CD4-positive, alpha-beta memory T cell (primary cell): ENCODE measurements at regions of chr15 and their contacts with region 1.

Region 1: DNA sequence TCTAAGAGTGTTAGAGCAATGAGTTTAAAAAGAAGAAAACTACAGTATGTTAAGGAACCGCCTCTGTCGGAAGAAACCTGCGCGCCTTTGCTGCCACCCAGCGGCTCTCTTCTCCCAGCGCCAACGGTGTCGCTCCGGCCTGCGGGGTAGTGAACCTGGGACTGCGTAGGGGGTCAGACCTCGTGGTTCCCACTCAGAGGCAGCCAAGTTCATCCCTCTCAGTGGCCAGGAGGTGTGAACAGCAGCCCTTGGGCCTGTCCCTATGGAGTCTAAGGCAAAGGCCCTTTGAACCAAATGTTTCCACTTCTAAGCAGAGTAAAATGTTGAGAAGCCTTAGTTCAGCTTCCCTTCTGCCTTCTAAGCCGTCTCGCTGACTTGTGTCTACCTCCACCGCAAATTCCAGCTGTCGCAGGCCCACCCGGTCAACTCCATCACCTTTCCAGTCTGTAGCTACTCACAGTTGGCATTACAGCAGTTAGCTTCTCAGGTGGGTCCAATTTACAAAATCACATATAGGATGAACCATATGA is 980 bp upstream of the RAB27A start:
- DNase-seq: peak; percentile 80 to 84 (median 82)
- H3K4me3 ChIP-seq: peak overlapping the region; percentile 66 to 85
- H3K4me3 Mint-ChIP-seq: peak overlapping the region; percentile 88 to 96 (median 93)
- H3K27ac ChIP-seq: peak overlapping the region; percentile 96
- H3K27ac Mint-ChIP-seq: peak overlapping the region; percentile 87 to 96 (median 95)
- H3K4me1 ChIP-seq: peaks cover 36% of the 10 kb centered on the region
- H3K4me1 Mint-ChIP-seq: peaks cover 26 to 49% (median 31%) of the 10 kb centered on the region in 4 donors
- H3K27me3 ChIP-seq: no peaks in the 10 kb centered on the region
- H3K27me3 Mint-ChIP-seq: no peaks in the 10 kb centered on the region

Region 2: GRCh38 chr15:55196458-55197361 is 93.9 kb before region 1 on chr15 and contains the start of gene RSL24D1:
- CTCF ChIA-PET with region 1: interaction called, 6 read pairs
- POLR2A ChIA-PET with region 1: interaction called, 10 read pairs
- intact Hi-C with region 1: loop called (anchors 1 kb)
- DNase-seq: peak; percentile 94 to 98 (median 97)
- H3K4me3 ChIP-seq: peak within 1 kb of the TSS; percentile 90 to 97
- H3K4me3 Mint-ChIP-seq: no peak within 1 kb of the TSS
- H3K27ac ChIP-seq: peak within 1 kb of the TSS; percentile 87
- H3K27ac Mint-ChIP-seq: no peak within 1 kb of the TSS
- H3K4me1 ChIP-seq: peaks cover 40% of the 10 kb centered on the region
- H3K4me1 Mint-ChIP-seq: peaks cover 10 to 17% (median 13%) of the 10 kb centered on the region in 4 donors
- H3K27me3 ChIP-seq: no peaks in the 10 kb centered on the region
- H3K27me3 Mint-ChIP-seq: no peaks in the 10 kb centered on the region
- total RNA-seq, gene RSL24D1: 103 to 107 TPM

Region 3: DNA sequence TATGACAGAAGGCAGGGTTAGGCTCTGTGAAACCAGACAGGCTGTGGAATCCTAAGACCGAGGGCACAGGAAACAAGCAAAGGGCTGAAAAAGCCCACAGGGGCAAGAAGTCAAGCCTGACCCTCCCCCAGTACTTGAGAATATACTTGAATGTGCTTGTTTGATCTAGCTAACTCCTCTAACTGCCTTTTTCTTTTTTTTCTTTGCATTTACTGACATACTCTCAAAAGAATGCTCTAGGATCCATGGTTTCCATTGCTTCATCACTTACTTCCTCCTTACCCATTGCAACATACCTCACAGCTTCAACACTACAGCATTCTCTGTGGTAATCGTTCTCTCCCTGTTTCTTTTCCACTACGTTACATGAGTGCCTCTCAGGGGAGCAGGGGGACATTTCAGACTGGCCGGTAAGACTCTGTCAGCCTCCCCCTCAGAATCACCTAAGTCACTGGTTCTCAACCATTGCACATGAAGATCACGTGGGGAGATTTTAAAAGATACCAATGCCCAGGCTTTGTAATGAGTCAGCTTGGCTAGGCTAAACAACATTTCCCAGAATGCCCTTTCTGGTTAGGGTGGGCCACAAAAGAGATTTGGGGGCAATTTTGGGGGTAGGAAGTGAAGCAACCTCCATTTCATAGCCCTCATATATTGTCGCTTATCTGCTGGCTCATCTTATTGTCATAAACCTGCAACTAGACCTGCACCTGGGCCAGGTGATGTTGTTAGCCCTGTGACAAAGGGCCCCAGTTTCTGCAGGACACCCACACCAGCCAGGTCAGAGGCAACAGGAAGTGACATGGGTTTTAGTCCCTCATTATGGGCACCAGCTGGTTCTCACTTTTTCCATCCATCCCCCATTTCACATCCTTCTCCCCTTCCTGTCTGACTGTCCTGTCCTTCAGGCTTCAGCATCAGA is 69.2 kb before region 1 on chr15:
- CTCF ChIA-PET with region 1: interaction called, 159 read pairs
- POLR2A ChIA-PET with region 1: interaction called, 7 read pairs
- intact Hi-C with region 1: loop called (anchors 1 kb)
- DNase-seq: peak in 1 of 5 donors; percentile 42
- H3K4me3 ChIP-seq: no peak overlapping the region
- H3K4me3 Mint-ChIP-seq: peak overlapping the region in 6 of 8 donors; percentile 9 to 75 (median 56)
- H3K27ac ChIP-seq: no peak overlapping the region
- H3K27ac Mint-ChIP-seq: peak overlapping the region in 6 of 7 donors; percentile 34 to 77 (median 62)
- H3K4me1 ChIP-seq: peaks cover 57% of the 10 kb centered on the region
- H3K4me1 Mint-ChIP-seq: peaks cover 43 to 73% (median 57%) of the 10 kb centered on the region in 4 donors
- H3K27me3 ChIP-seq: no peaks in the 10 kb centered on the region
- H3K27me3 Mint-ChIP-seq: no peaks in the 10 kb centered on the region

Region 4: GRCh38 chr15:55255714-55256113 is 34.9 kb before region 1 on chr15:
- CTCF ChIA-PET with region 1: interaction called, 7 read pairs
- POLR2A ChIA-PET with region 1: no interaction called
- intact Hi-C with region 1: loop called (anchors 1 kb)
- DNase-seq: peak in 3 of 5 donors; percentile 24 to 30 (median 26)
- H3K4me3 ChIP-seq: peak overlapping the region; percentile 8 to 32
- H3K4me3 Mint-ChIP-seq: peak overlapping the region; percentile 80 to 93 (median 83)
- H3K27ac ChIP-seq: peak overlapping the region; percentile 64
- H3K27ac Mint-ChIP-seq: peak overlapping the region; percentile 80 to 97 (median 93)
- H3K4me1 ChIP-seq: peaks cover 66% of the 10 kb centered on the region
- H3K4me1 Mint-ChIP-seq: peaks cover 52 to 78% (median 66%) of the 10 kb centered on the region in 4 donors
- H3K27me3 ChIP-seq: no peaks in the 10 kb centered on the region
- H3K27me3 Mint-ChIP-seq: no peaks in the 10 kb centered on the region

Region 5: DNA sequence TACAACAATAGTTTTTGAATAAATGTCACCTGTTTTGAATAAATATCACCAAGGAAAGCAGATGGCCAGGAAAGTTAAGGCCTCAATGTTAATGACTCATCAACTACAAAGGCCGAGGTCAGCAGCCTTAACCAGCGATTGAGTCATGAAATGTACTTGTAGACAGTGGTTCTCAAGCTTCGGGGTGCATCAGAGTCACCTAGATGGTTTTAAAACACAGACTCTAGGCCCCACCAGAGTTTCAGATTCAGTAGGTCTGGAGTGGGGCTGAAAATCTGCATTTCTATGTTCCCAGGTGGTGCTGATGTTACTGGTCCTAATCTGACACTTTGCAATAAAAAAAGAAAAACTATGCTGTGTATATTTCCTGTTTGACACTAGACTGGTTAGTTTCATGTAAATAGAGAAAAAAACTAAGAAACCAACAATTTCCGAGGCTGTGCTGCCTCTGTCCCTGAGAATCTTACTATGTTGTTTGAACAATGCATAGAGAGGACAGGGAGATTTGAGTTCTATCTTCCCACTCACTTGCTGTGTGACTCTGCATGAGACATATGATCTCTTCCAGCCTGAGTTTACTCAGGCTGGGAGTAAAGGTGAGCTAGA is 10.7 kb before region 1 on chr15:
- CTCF ChIA-PET with region 1: interaction called, 12 read pairs
- POLR2A ChIA-PET with region 1: interaction called, 7 read pairs
- intact Hi-C with region 1: loop called (anchors 1 kb)
- DNase-seq: peak; percentile 38 to 88 (median 45)
- H3K4me3 ChIP-seq: peak overlapping the region; percentile 14 to 25
- H3K4me3 Mint-ChIP-seq: peak overlapping the region; percentile 33 to 88 (median 70)
- H3K27ac ChIP-seq: peak overlapping the region; percentile 56
- H3K27ac Mint-ChIP-seq: peak overlapping the region; percentile 87 to 98 (median 95)
- H3K4me1 ChIP-seq: peaks cover 90% of the 10 kb centered on the region
- H3K4me1 Mint-ChIP-seq: peaks cover 72 to 99% (median 86%) of the 10 kb centered on the region in 4 donors
- H3K27me3 ChIP-seq: no peaks in the 10 kb centered on the region
- H3K27me3 Mint-ChIP-seq: no peaks in the 10 kb centered on the region

Region 6: DNA sequence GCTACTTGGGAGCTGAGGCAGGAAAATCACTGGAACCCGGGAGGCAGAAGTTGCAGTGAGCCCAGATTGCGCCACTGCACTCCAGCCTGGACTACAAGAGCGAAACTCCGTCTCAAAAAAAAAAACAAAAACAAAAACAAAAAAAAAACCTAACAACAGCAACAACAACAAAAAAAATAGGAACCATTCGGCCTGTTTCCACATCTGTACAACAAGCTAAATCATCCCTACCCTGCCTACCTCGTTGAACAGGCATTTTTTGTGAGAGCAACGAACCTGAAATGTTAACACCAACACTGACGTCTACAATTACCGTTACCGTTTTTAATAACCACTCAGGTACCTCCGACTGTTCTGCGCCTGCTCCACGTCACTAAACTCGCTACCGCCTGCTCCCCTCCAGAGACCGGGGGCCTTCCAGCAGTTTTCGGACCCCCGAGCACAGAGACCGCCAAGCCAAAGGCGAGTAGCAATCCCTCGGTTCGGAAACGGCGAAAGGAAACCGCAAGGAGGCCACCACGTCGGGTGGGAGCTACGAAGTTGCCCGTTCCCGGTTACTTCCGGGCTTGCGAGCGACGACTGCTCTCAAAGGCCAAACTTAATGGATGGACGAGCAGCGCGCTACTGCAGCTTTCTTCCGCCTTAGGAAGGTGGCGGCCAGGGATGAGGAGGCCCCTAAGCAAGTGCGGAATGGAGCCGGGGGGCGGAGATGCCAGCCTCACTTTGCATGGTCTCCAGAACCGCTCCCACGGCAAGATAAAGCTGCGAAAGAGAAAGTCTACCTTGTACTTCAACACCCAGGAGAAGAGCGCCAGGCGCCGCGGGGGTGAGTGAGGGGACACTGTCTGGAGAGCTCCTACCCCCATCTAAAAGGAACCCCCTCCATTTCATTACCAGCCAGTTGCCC is 28.2 kb after region 1 on chr15 and contains the starts of genes PIGB and PIGBOS1:
- CTCF ChIA-PET with region 1: interaction called, 6 read pairs
- POLR2A ChIA-PET with region 1: interaction called, 8 read pairs
- intact Hi-C with region 1: loop called (anchors 2 kb)
- DNase-seq: peak; percentile 83 to 88 (median 87)
- H3K4me3 ChIP-seq: peak within 1 kb of the TSS; percentile 98 to 100
- H3K4me3 Mint-ChIP-seq: peak within 1 kb of the TSS; percentile 96 to 100 (median 98)
- H3K27ac ChIP-seq: peak within 1 kb of the TSS; percentile 93
- H3K27ac Mint-ChIP-seq: peak within 1 kb of the TSS; percentile 99 to 100 (median 100)
- H3K4me1 ChIP-seq: peaks cover 61% of the 10 kb centered on the region
- H3K4me1 Mint-ChIP-seq: peaks cover 44 to 82% (median 64%) of the 10 kb centered on the region in 4 donors
- H3K27me3 ChIP-seq: no peaks in the 10 kb centered on the region
- H3K27me3 Mint-ChIP-seq: no peaks in the 10 kb centered on the region
- total RNA-seq, gene PIGB: 26.4 to 28.6 TPM
- total RNA-seq, gene PIGBOS1: 14.1 to 20.3 TPM

Region 7: DNA sequence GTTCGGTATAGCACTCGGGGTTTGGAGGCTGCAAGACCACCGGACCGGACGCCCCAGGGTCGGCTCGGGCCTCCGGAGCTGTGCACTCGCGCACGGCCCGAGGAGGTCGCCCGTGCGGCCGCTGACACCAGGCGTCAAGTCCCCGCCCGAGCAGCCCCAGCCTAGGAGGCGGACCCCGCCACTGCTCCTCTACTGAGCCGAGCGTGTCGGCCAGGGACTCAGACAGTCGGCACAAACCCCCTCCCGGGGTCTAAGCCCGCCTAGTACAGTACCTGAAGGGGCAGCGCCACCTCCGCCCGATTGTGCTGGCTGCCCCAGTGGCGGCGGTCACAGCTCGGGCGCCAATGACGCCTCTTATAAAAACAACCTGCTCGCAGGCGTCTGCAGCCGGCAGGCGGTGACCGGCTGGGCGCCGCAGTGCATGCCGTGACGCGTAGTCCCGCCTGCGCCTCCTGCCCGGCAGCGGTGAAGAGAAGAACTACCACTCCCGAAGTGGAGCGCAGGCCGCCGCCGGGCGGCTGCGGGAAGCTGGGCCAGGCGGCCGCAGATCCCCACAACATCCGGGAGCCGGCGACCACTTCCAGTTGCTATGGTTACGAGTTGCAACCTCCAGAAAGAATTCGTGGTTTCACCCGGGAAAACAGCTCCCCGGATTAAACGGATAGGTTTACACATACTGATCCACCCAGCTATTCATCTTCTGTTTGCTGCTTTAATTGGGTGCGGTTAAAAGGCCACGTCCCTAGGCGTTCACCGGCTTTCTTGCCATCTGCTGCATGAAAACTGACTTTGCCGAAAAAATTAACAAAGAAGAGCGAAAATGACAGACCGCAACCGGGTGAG is 117.6 kb after region 1 on chr15 and contains the starts of genes CCPG1 and PIERCE2:
- CTCF ChIA-PET with region 1: no interaction called
- POLR2A ChIA-PET with region 1: interaction called, 4 read pairs
- intact Hi-C with region 1: loop called (anchors 2 kb)
- DNase-seq: peak; percentile 87 to 91 (median 90)
- H3K4me3 ChIP-seq: peak within 1 kb of the TSS; percentile 45 to 91
- H3K4me3 Mint-ChIP-seq: peak within 1 kb of the TSS; percentile 91 to 96 (median 95)
- H3K27ac ChIP-seq: peak within 1 kb of the TSS; percentile 70
- H3K27ac Mint-ChIP-seq: peak within 1 kb of the TSS; percentile 86 to 96 (median 94)
- H3K4me1 ChIP-seq: peaks cover 31% of the 10 kb centered on the region
- H3K4me1 Mint-ChIP-seq: peaks cover 18 to 39% (median 27%) of the 10 kb centered on the region in 4 donors
- H3K27me3 ChIP-seq: no peaks in the 10 kb centered on the region
- H3K27me3 Mint-ChIP-seq: no peaks in the 10 kb centered on the region
- total RNA-seq, gene CCPG1: 35.4 to 38.2 TPM
- total RNA-seq, gene PIERCE2: not detected